Motor neuron (in vitro differentiated cells): ENCODE measurements at regions of chr7 and their contacts with region 1.

Region 1: DNA sequence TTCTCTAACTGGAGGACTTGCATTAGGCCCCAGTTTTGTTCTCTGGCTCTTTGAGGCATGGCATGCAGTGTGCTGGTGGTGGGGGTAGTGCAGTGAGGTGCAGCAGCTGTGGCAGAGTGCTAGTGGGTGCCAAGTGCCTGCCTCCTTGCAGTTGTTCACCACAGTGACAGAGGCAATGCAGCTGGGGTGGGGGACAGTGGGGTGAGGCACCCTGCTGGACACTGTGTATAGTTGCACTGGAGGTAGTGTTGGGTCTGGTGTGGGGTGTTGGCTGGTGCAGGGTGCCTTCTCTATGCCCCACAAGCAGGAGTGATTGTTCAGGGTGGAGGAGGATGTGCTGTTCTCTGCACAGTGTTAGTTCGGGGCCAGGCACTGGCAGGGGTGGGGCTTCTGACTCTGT is 21.7 kb upstream of the KEL start:
- ATAC-seq: no peak
- H3K4me3 ChIP-seq: no peak overlapping the region
- H3K27ac ChIP-seq: no peak overlapping the region
- H3K4me1 ChIP-seq: no peaks in the 10 kb centered on the region

Region 2: GRCh38 chr7:142854372-142855113 is 129.3 kb before region 1 on chr7 and contains the start of gene EPHB6:
- in situ Hi-C with region 1: no loop called
- ATAC-seq: peak; percentile 75 to 82 (median 78)
- H3K4me3 ChIP-seq: peak within 1 kb of the TSS; percentile 42 to 75 (median 51)
- H3K27ac ChIP-seq: no peak within 1 kb of the TSS
- H3K4me1 ChIP-seq: peaks cover 0 to 3% of the 10 kb centered on the region in 2 donors
- total RNA-seq, gene EPHB6: 0.97 to 9.9 (median 3.3) TPM

Region 3: DNA sequence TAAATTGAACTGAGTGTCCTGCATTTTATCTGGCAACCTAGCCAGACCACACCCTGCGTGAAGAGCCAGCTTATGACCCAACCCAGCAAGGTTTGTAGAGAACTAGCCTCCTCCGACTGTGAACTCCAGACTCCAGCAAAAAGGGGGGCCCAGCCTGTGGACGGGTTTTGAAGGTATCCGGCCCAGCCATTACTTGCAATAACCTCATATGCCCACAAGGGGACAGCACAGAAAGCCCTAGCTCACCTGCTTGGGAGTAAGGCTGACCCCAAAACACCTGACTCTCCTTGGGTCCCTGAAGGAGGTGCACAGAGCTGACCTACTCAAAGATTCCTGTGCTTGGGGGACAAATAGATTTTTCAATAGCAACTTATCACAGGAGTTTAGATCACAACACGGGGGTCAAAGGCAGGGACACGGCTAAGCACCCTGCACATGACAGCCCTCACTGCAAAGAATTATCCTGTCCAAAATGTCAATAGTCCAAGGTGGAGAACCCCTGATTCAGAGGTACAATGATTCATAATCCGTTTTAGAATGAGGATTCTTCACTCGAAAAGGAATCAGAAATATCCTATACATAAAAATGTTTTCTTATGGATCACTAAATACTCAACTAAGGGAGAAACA is 102.8 kb before region 1 on chr7:
- in situ Hi-C with region 1: loop called in 1 of 9 experiments (anchors 25 kb)
- ATAC-seq: peak in 1 of 8 experiments; percentile 74
- H3K4me3 ChIP-seq: no peak overlapping the region
- H3K27ac ChIP-seq: no peak overlapping the region
- H3K4me1 ChIP-seq: peaks cover 0 to 3% of the 10 kb centered on the region in 2 donors

Region 4: DNA sequence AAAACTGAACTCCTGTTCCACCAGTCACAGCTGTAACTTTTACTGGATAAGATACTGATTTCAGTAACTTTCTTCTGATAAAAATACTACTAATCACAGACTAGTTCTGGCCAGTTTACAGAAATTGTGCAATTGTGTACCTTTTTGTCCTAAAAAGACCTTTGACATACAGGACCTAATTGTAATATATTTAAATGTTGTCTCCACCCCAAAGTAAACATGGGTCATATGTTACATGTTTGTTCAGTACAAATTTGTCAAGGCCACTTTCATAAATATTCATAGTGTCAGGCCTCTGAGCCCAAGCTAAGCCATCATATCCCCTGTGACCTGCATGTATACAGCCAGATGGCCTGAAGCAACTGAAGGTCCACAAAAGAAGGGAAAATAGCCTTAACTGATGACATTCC is 121.0 kb after region 1 on chr7:
- in situ Hi-C with region 1: no loop called
- ATAC-seq: no peak
- H3K4me3 ChIP-seq: no peak overlapping the region
- H3K27ac ChIP-seq: no peak overlapping the region
- H3K4me1 ChIP-seq: no peaks in the 10 kb centered on the region

Region 5: GRCh38 chr7:143258831-143259230 is 275.0 kb after region 1 on chr7:
- in situ Hi-C with region 1: no loop called
- ATAC-seq: no peak
- H3K4me3 ChIP-seq: no peak overlapping the region
- H3K27ac ChIP-seq: no peak overlapping the region
- H3K4me1 ChIP-seq: peaks cover under 1 to 4% of the 10 kb centered on the region in 2 donors